CD4-positive, alpha-beta T cell (primary cell): ENCODE measurements at regions of chr9 and their contacts with region 1.

Region 1: GRCh38 chr9:96217754-96218693 is 84.0 kb downstream of the HSD17B3 start:
- DNase-seq: peak; percentile 42 to 85 (median 66)
- ATAC-seq: peak; percentile 89
- H3K4me3 ChIP-seq: peak overlapping the region; percentile 28
- H3K4me3 Mint-ChIP-seq: peak overlapping the region; percentile 79
- H3K27ac ChIP-seq: no peak overlapping the region
- H3K27ac Mint-ChIP-seq: no peak overlapping the region
- H3K4me1 ChIP-seq: peaks cover 20% of the 10 kb centered on the region
- H3K4me1 Mint-ChIP-seq: peaks cover 9% of the 10 kb centered on the region
- H3K27me3 ChIP-seq: peaks cover 26 to 31% of the 10 kb centered on the region in 2 experiments
- H3K27me3 Mint-ChIP-seq: peaks cover 73% of the 10 kb centered on the region
- CTCF ChIP-seq: peak; percentile 94

Region 2: DNA sequence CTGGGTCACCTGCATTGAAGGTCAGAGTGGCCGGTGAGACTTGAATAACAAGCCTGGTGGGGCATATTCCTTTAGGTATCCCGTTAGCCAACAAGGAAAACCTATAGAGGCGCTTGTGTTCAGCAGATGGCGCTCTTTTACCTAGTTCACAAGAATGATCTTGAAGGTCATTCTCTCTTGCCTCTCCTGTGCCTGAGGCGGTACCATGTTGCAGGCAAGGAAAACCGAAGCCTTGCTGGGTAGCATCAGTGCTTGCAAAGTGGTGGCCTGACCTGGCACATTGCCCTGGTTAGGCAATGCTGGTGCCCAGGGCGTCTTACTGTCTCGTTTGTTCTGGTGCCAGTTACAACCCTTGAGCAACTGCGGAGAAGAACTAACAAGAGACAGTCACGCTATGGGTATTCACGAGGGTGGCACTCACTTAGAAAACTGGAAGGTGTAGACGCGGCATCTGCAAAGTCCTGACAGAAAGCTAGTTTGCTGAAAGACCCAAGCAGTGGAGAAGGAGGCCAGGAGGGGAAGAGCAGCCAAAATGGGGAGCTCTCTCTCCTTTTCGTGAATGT is 1434.8 kb before region 1 on chr9:
- CTCF ChIA-PET with region 1: no interaction called
- POLR2A ChIA-PET with region 1: no interaction called
- intact Hi-C with region 1: loop called in 1 of 2 experiments (anchors 10 kb)
- DNase-seq: peak in 13 of 14 experiments; percentile 3 to 66 (median 25)
- ATAC-seq: no peak
- H3K4me3 ChIP-seq: no peak overlapping the region
- H3K4me3 Mint-ChIP-seq: no peak overlapping the region
- H3K27ac ChIP-seq: no peak overlapping the region
- H3K27ac Mint-ChIP-seq: no peak overlapping the region
- H3K4me1 ChIP-seq: peaks cover 3% of the 10 kb centered on the region
- H3K4me1 Mint-ChIP-seq: peaks cover 13% of the 10 kb centered on the region
- H3K27me3 ChIP-seq: no peaks in the 10 kb centered on the region
- H3K27me3 Mint-ChIP-seq: no peaks in the 10 kb centered on the region
- CTCF ChIP-seq: peak; percentile 72

Region 3: DNA sequence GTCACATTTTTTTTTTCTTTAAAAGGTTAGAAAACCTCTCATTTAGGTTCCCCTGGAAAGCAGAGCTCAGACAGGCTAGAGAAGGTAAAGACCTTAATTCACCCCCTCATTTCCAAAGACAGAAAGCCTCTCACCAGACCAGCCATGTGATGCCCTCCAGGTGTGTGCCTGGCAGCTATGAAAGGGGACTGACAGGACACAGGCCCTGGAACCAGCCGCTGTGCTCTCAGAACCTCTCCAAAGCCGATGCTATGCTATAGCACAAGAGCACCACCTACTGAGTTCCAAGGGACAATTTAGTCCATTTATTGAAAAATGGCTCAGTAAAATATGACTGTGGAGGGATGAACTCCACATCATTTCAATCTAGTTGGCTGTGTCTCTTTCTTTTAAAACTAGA is 949.3 kb before region 1 on chr9:
- CTCF ChIA-PET with region 1: no interaction called
- POLR2A ChIA-PET with region 1: no interaction called
- intact Hi-C with region 1: loop called in 1 of 2 experiments (anchors 10 kb)
- DNase-seq: no peak
- ATAC-seq: no peak
- H3K4me3 ChIP-seq: no peak overlapping the region
- H3K4me3 Mint-ChIP-seq: no peak overlapping the region
- H3K27ac ChIP-seq: no peak overlapping the region
- H3K27ac Mint-ChIP-seq: no peak overlapping the region
- H3K4me1 ChIP-seq: peaks cover 2% of the 10 kb centered on the region
- H3K4me1 Mint-ChIP-seq: peaks cover 28% of the 10 kb centered on the region
- H3K27me3 ChIP-seq: no peaks in the 10 kb centered on the region
- H3K27me3 Mint-ChIP-seq: no peaks in the 10 kb centered on the region
- CTCF ChIP-seq: peak; percentile 17

Region 4: GRCh38 chr9:95379630-95380029 is 838.4 kb before region 1 on chr9:
- CTCF ChIA-PET with region 1: no interaction called
- POLR2A ChIA-PET with region 1: no interaction called
- intact Hi-C with region 1: loop called (anchors 2 to 10 kb)
- DNase-seq: peak in 12 of 14 experiments; percentile 1 to 56 (median 6)
- ATAC-seq: no peak
- H3K4me3 ChIP-seq: no peak overlapping the region
- H3K4me3 Mint-ChIP-seq: no peak overlapping the region
- H3K27ac ChIP-seq: no peak overlapping the region
- H3K27ac Mint-ChIP-seq: no peak overlapping the region
- H3K4me1 ChIP-seq: peaks cover 2% of the 10 kb centered on the region
- H3K4me1 Mint-ChIP-seq: no peaks in the 10 kb centered on the region
- H3K27me3 ChIP-seq: peaks cover 15 to 20% of the 10 kb centered on the region in 2 experiments
- H3K27me3 Mint-ChIP-seq: peaks cover 45% of the 10 kb centered on the region
- CTCF ChIP-seq: peak; percentile 56

Region 5: DNA sequence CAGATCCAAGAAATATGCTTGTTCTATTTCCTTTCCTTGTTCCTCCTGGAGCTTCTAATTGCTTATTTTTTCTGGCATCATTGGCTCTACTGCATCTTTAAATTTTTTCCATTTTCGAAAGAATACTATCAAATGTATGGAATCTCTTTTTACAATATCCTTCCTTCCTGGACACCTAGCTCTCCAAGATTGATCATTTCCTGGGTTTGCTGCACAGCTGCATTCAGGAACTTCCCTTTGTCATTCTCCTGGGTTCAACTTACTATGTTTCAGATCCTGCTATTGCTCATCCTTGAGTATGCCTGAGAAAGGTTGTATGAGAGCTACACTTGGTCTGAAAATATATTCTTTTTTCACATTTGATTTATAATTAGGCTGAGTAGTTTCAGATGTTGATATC is 416.2 kb before region 1 on chr9:
- CTCF ChIA-PET with region 1: no interaction called
- POLR2A ChIA-PET with region 1: no interaction called
- intact Hi-C with region 1: loop called in 1 of 2 experiments (anchors 5 kb)
- DNase-seq: no peak
- ATAC-seq: no peak
- H3K4me3 ChIP-seq: no peak overlapping the region
- H3K4me3 Mint-ChIP-seq: no peak overlapping the region
- H3K27ac ChIP-seq: no peak overlapping the region
- H3K27ac Mint-ChIP-seq: no peak overlapping the region
- H3K4me1 ChIP-seq: no peaks in the 10 kb centered on the region
- H3K4me1 Mint-ChIP-seq: no peaks in the 10 kb centered on the region
- H3K27me3 ChIP-seq: peaks cover 4 to 9% of the 10 kb centered on the region in 2 experiments
- H3K27me3 Mint-ChIP-seq: peaks cover 18% of the 10 kb centered on the region
- CTCF ChIP-seq: no peak

Region 6: DNA sequence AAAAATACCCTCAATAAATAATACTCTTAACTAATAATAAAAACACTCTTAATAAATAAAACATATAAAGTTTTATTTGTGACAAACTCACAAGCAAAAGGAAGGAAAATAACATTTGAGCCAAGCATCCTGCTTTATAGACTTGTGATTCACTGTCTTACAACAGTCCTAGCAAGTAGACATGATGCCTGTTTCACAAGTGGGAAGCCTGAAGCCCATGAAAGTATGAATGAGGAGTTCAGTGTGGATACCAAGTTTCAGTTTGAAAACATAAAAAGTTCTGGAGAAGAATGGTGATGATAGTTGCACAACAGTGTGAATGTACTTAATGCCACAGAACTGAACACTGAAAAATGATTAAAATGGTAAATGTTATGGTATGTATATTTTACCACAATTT is 242.9 kb after region 1 on chr9:
- CTCF ChIA-PET with region 1: no interaction called
- POLR2A ChIA-PET with region 1: no interaction called
- intact Hi-C with region 1: no loop called
- DNase-seq: no peak
- ATAC-seq: no peak
- H3K4me3 ChIP-seq: no peak overlapping the region
- H3K4me3 Mint-ChIP-seq: no peak overlapping the region
- H3K27ac ChIP-seq: no peak overlapping the region
- H3K27ac Mint-ChIP-seq: no peak overlapping the region
- H3K4me1 ChIP-seq: no peaks in the 10 kb centered on the region
- H3K4me1 Mint-ChIP-seq: peaks cover 7% of the 10 kb centered on the region
- H3K27me3 ChIP-seq: no peaks in the 10 kb centered on the region
- H3K27me3 Mint-ChIP-seq: no peaks in the 10 kb centered on the region
- CTCF ChIP-seq: no peak